ENCODE measurements at regions of chr4 and their contacts with region 1.

Region 1: GRCh38 chr4:59597536-59598329 is 1602.4 kb upstream of the ADGRL3 start:
- DNase-seq: peak; percentile 62

Region 2: DNA sequence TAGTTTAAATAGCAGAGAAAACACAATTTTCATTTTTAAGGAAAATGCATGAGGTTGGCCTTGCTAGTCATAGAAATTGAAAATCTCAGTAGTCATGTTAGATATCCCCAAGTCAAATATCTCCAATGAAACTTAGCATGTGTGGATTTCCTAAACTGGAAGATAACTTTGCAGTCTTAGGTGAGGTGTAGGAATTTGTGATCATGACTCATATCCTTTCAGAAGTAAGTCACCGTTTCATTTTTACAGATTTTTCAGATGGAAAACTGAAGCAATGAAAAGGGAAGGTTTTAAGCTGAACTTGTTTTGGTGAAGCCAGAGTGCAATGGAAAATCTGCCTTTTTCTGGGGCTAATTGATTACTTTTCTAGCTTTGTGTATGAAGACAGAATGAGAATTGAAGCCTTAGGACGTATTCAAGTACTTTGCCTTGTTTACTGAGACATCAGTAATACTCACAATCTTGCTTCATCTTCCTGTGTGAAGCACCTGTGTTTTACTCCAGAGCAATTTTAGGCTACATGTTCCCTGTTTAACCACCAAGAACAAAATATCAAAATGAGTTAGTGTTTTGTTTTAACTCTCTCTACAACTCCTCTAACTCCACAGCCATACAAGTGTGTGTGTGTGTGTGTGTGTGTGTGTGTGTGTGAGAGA is 60.4 kb before region 1 on chr4:
- intact Hi-C with region 1: loop called in 1 of 2 experiments (anchors 2 kb)
- DNase-seq: no peak

Region 3: DNA sequence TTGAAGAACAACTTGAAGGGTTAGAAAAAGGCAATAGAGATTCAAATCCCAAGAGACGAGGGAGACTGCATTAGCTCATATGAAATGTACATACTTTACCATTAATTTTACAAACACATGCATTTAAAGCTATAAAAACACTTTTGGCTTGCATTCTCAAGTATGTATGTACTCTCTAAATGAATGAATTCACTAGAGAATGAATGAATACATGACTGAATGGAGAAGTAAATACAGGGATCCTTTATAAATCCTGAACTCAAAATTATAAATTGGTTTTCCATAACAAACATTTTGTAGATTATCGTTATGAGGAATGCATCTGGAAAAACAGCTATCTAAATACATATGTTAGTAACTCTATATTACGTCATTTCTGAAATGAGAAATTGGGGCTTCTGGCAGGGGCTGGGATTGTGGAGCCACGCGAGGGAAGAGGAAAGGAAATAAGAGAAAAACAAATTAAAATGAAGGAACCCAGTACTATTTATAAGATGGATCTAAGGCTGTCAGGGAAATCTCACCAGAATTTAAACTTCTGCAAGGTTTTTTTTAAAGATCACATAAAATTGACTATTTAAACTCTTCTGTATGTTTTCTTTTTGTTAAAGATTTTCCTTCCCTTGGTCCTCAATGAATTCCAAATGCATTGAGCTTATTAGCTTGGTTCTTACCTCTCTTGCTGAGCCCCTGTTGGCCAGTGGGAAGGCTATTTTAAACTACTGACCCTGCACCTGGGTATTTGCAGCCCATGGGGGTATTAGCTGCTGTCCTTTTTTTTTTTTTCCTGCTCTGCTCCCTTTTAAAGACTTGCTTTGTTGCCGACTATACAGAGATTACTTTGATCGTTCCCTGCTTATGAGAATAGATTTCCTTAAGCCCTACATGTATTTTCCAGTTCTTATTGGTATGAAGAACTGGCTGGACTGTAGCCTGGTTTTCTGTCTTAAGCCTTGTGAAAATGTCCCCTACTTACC is 1810.2 kb after region 1 on chr4:
- intact Hi-C with region 1: no loop called
- DNase-seq: no peak

Region 4: GRCh38 chr4:61427818-61428495 is 1830.2 kb after region 1 on chr4:
- intact Hi-C with region 1: loop called in 1 of 2 experiments (anchors 5 kb)
- DNase-seq: peak; percentile 54

Measured in posterior vena cava (tissue), 2 donors.